GM18951 (cell line): ENCODE measurements at regions of chr7 and their contacts with region 1.

Region 1: GRCh38 chr7:21261627-21262594 is 166.0 kb upstream of the SP4 start:
- POLR2A ChIP-seq: no peak

Region 2: DNA sequence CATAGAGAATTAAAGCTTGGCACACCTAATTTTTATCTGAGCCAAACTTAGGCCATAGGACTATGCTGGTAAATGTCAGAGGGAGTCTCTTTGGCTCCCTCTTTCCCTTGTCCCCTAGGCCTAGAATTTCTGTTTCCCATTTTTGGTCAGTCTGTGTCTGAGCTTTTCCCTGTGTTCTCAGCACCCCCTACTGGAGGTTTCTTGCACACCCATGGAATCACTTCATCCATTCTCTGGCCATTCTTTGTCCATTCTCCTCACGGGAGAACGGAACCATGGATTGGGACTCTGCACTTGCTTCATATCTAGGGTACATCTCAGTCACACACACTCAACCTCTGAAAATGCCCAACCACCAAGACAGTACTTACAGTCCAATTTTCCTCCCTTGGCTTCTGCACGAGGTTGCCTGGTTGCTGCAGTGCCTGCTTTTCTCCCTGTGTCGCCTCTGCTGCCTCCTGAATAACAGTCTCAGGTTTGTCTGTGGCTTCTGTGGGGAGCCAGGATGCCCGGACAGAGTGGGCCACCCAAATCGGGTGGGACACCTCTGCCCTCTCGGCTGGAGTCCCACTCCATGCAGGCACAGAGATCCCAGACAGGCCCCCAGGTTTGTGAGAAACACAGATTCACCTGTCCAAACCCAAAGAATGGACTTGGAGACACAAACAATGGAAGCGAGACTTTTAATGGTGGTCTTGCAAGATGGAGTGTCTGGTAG is 245.9 kb after region 1 on chr7:
- in situ Hi-C with region 1: loop called (anchors 10 kb)
- POLR2A ChIP-seq: no peak

Region 3: GRCh38 chr7:21767300-21767900 is 505.5 kb after region 1 on chr7:
- in situ Hi-C with region 1: loop called (anchors 25 kb)
- POLR2A ChIP-seq: no peak

Region 4: GRCh38 chr7:21850531-21851285 is 588.8 kb after region 1 on chr7:
- in situ Hi-C with region 1: no loop called
- POLR2A ChIP-seq: no peak

Region 5: GRCh38 chr7:22001345-22002004 is 739.6 kb after region 1 on chr7:
- in situ Hi-C with region 1: loop called (anchors 25 kb)
- POLR2A ChIP-seq: no peak